ENCODE measurements at regions of chr6 and their contacts with region 1.

Region 1: DNA sequence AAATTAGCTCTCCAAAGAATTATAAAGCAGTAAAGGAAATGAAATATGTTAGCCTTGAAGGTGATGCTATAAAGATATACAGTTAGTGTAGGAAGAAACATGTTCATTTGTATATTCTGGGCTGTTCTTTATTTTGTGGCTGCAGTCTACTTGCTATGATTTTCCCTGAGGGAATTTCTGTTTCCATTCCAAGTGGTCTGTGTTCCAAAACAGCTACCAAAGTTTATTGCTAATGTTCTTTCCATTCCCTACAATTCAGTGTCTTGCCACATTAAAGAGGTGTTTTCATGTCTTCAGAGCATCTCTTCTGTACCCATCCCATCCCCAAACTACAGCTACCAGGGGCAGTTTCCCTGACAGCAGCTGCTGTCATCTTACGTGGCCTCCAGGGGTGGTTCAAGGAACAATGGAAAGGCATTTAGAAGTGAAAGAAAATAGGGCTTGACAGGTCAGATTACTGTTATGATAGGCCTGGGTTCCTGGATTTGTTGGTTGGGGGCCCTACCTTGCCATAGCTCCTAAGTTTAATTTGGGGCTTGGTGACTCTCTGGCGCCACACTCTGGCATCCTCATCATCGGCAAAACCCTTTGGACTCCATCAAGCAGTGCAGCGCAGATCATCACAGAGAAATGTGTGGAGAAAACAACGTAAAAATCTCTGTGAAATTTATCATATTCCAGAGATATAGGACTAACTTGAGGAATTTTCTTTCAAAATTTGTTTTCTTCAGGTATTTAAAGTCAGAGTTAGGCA is 33.8 kb upstream of the AIG1 start:
- DNase-seq: peak; percentile 21
- H3K4me3 Mint-ChIP-seq: no peak overlapping the region
- H3K27ac Mint-ChIP-seq: no peak overlapping the region
- H3K4me1 Mint-ChIP-seq: peaks cover 3% of the 10 kb centered on the region
- H3K27me3 Mint-ChIP-seq: no peaks in the 10 kb centered on the region

Region 2: GRCh38 chr6:141744971-141745370 is 1281.9 kb before region 1 on chr6:
- intact Hi-C with region 1: no loop called
- DNase-seq: no peak
- H3K4me3 Mint-ChIP-seq: no peak overlapping the region
- H3K27ac Mint-ChIP-seq: no peak overlapping the region
- H3K4me1 Mint-ChIP-seq: no peaks in the 10 kb centered on the region
- H3K27me3 Mint-ChIP-seq: no peaks in the 10 kb centered on the region

Region 3: DNA sequence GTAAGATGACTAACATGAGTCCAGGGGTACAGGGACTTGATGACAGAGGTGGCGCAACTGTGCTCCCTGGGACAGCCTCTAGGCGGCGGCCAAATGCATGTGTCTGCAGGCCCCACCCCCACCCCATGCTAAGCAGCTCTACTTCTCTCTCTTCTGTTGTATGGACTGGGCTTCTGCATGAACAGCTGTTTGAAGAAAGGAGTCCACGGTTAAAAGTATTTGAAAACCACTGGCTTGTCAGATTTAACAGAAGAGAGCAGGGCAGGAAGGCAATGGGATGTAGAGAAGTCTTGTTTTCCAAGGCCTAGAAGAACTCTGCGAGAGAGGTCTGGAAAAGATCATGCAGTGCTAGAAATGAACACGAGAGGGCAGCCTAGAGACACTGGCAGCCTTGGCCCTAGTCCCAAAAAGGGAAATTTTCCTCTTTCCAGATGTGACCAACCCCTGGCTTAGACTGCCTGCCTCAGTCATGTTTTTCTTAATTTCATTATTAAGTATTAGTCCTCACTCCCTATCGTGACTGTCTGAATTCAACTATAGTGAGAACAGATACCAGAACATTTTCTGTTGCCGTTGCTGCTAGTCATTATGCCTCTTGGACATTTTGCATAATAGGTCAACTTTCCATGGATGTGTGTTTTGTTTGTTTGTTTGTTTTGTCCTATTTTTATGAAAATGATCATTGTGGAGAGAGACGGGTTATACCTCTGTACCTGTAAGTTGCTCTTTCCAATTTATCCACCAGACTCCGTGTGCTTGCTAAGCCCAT is 460.1 kb before region 1 on chr6:
- intact Hi-C with region 1: loop called (anchors 2 kb)
- DNase-seq: peak; percentile 14
- H3K4me3 Mint-ChIP-seq: no peak overlapping the region
- H3K27ac Mint-ChIP-seq: no peak overlapping the region
- H3K4me1 Mint-ChIP-seq: peaks cover 19% of the 10 kb centered on the region
- H3K27me3 Mint-ChIP-seq: no peaks in the 10 kb centered on the region

Region 4: DNA sequence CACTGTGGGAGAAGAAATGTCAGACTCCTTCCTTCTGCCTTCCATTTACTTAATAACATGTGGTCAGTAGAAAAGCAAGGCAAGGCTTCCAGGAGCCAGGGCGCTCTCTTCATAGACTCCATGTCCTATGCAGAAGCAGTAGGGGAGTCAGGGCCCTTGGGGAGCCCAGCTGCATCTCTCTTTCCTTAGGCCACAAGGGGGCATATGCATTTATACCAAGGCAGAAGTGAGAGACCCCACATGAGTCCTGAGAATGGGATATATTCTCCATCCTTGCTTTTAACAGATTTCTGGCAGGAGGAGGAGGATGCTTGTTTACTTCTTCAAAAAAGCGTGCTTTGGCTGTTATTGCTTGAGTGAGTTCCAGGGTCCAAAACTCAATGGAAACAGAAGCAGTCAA is 280.3 kb before region 1 on chr6:
- intact Hi-C with region 1: loop called (anchors 2 kb)
- DNase-seq: no peak
- H3K4me3 Mint-ChIP-seq: no peak overlapping the region
- H3K27ac Mint-ChIP-seq: no peak overlapping the region
- H3K4me1 Mint-ChIP-seq: no peaks in the 10 kb centered on the region
- H3K27me3 Mint-ChIP-seq: peaks cover 11% of the 10 kb centered on the region

Region 5: DNA sequence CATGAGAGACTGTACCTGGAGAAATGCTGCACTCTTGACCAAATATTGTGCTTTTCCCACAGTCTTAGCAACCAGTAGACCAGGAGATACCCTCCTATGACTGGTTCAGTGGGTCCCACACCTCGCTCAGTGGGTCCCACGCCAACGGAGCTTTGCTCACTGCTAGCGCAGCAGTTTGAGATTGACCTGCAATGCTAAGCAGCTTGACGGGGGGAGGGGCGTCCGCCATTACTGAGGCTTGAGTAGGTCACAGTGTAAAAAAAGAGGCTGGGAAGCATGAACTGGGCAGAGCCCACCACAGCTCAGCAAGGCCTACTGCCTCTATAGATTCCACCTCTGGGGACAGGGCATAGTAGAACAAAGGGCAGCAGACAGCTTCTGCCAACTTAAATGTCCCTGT is 32.9 kb before region 1 on chr6:
- intact Hi-C with region 1: no loop called
- DNase-seq: no peak
- H3K4me3 Mint-ChIP-seq: no peak overlapping the region
- H3K27ac Mint-ChIP-seq: no peak overlapping the region
- H3K4me1 Mint-ChIP-seq: no peaks in the 10 kb centered on the region
- H3K27me3 Mint-ChIP-seq: peaks cover 4% of the 10 kb centered on the region

Measured in activated T-helper 2 cell treated with anti-CD3 and anti-CD28 coated beads, Interferon-gamma antibody, Interleukin-2, Interleukin-4, amounts not matched to agents 10 μg/mL and 5 μg/mL and 100 μg/mL, durations not matched to agents 14 hours and 24 hours and 36 hours (primary cell).